CD4-positive, alpha-beta T cell (primary cell): ENCODE measurements at regions of chr6 and their contacts with region 1.

Region 1: GRCh38 chr6:166936079-166936787 is 20.1 kb downstream of the RNASET2 start:
- DNase-seq: peak in 3 of 14 experiments; percentile 17 to 62 (median 31)
- ATAC-seq: peak; percentile 51
- H3K4me3 ChIP-seq: no peak overlapping the region
- H3K4me3 Mint-ChIP-seq: peak overlapping the region; percentile 30
- H3K27ac ChIP-seq: peak overlapping the region in 1 of 2 donors; percentile 7
- H3K27ac Mint-ChIP-seq: peak overlapping the region; percentile 30
- H3K4me1 ChIP-seq: peaks cover 35% of the 10 kb centered on the region
- H3K4me1 Mint-ChIP-seq: peaks cover 49% of the 10 kb centered on the region
- H3K27me3 ChIP-seq: no peaks in the 10 kb centered on the region
- H3K27me3 Mint-ChIP-seq: no peaks in the 10 kb centered on the region
- CTCF ChIP-seq: no peak

Region 2: DNA sequence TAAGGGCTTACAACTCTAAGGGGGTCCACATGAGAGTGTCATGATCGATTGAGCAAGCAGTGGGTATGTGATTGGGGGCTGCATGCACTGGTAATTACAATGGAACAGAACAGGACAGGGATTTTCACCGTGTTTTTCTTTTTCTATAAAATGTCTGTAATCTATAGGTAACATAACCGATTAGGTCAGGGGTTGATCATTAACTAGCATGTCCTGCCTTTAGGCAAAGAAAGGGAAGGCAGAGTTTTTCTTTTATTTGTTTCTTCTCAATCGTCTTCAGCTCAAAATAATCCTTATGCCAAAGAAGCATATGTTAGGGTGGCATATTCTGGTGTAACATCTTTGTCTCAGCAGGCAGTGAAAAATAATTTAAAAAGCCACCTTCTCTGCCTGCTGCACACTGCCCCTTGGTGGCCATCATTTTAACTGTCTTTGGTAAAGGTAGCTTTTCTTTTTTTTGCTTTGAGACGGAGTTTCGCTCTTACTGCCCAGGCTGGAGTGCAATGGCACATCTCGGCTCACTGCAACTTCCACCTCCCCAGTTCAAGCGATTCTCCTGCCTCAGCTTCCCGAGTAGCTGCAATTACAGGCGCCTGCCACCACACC is 53.3 kb after region 1 on chr6:
- CTCF ChIA-PET with region 1: interaction called, 12 read pairs
- POLR2A ChIA-PET with region 1: no interaction called
- intact Hi-C with region 1: loop called in 1 of 2 experiments (anchors 10 kb)
- DNase-seq: peak in 12 of 14 experiments; percentile 23 to 79 (median 48)
- ATAC-seq: peak; percentile 89
- H3K4me3 ChIP-seq: no peak overlapping the region
- H3K4me3 Mint-ChIP-seq: no peak overlapping the region
- H3K27ac ChIP-seq: no peak overlapping the region
- H3K27ac Mint-ChIP-seq: peak overlapping the region; percentile 39
- H3K4me1 ChIP-seq: peaks cover 5% of the 10 kb centered on the region
- H3K4me1 Mint-ChIP-seq: peaks cover 21% of the 10 kb centered on the region
- H3K27me3 ChIP-seq: no peaks in the 10 kb centered on the region
- H3K27me3 Mint-ChIP-seq: no peaks in the 10 kb centered on the region
- CTCF ChIP-seq: peak; percentile 44